GM12878 (cell line): ENCODE measurements at regions of chr3 and their contacts with region 1.

Region 1: GRCh38 chr3:149609595-149609994 is 48.2 kb downstream of the WWTR1 start:
- DNase-seq: peak; percentile 81
- ATAC-seq: peak; percentile 97
- H3K4me3 ChIP-seq: no peak overlapping the region
- H3K27ac ChIP-seq: no peak overlapping the region
- H3K4me1 ChIP-seq: peaks cover 16% of the 10 kb centered on the region
- H3K27me3 ChIP-seq: no peaks in the 10 kb centered on the region
- CTCF ChIP-seq: no peak
- EP300 ChIP-seq: peak; percentile 62
- POLR2A ChIP-seq: no peak
- RAD21 ChIP-seq: no peak

Region 2: GRCh38 chr3:149575961-149576564 is 33.5 kb before region 1 on chr3:
- CTCF ChIA-PET with region 1: interaction called, 80 read pairs
- POLR2A ChIA-PET with region 1: interaction called, 87 read pairs
- RAD21 ChIA-PET with region 1: interaction called, 181 read pairs
- SMC1A ChIA-PET with region 1: interaction called, 505 read pairs
- in situ Hi-C with region 1: no loop called
- intact Hi-C with region 1: no loop called
- DNase-seq: no peak
- ATAC-seq: peak; percentile 51
- H3K4me3 ChIP-seq: peak overlapping the region; percentile 10; the same call in 1 of the 2 replicates
- H3K27ac ChIP-seq: peak overlapping the region; percentile 70
- H3K4me1 ChIP-seq: peaks cover 59% of the 10 kb centered on the region
- H3K27me3 ChIP-seq: no peaks in the 10 kb centered on the region
- CTCF ChIP-seq: no peak
- EP300 ChIP-seq: 0 out of 4 replicates have a peak, but pooled peaks of 1 of the 2 experiments have one; percentile 35
- POLR2A ChIP-seq: no peak
- RAD21 ChIP-seq: no peak

Region 3: GRCh38 chr3:149581681-149582370 is 27.8 kb before region 1 on chr3:
- CTCF ChIA-PET with region 1: interaction called, 48 read pairs
- POLR2A ChIA-PET with region 1: interaction called, 87 read pairs
- RAD21 ChIA-PET with region 1: interaction called, 117 read pairs
- SMC1A ChIA-PET with region 1: interaction called, 505 read pairs
- in situ Hi-C with region 1: no loop called
- intact Hi-C with region 1: no loop called
- DNase-seq: no peak
- ATAC-seq: peak; percentile 57
- H3K4me3 ChIP-seq: peak overlapping the region; percentile 52; the same call in 1 of the 2 replicates
- H3K27ac ChIP-seq: peak overlapping the region; percentile 63
- H3K4me1 ChIP-seq: peaks cover 73% of the 10 kb centered on the region
- H3K27me3 ChIP-seq: no peaks in the 10 kb centered on the region
- CTCF ChIP-seq: no peak
- EP300 ChIP-seq: 0 out of 4 replicates have a peak, but pooled peaks of 1 of the 2 experiments have one; percentile 21
- POLR2A ChIP-seq: no peak
- RAD21 ChIP-seq: no peak

Region 4: DNA sequence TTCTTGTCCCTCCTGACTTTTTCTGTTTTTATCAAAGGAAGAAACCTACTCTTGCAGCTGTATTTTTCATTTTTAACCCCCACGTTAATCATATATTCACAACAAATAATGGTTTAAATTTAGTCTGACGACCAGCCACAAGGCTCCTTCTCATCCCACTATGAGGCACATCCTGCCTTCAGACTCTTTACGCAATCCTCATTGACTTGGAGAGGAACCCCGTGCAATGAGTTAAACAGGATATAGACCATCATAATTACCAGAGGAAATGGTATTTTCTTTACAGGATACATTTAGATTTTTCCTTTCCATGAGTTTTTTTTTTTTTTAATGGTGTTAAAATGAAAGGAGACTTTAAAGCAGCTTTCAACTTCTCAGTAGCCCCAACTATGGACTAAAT is 20.3 kb before region 1 on chr3:
- CTCF ChIA-PET with region 1: interaction called, 6 read pairs
- POLR2A ChIA-PET with region 1: interaction called, 87 read pairs
- RAD21 ChIA-PET with region 1: interaction called, 77 read pairs
- SMC1A ChIA-PET with region 1: interaction called, 197 read pairs
- in situ Hi-C with region 1: no loop called
- intact Hi-C with region 1: no loop called
- DNase-seq: no peak
- ATAC-seq: no peak
- H3K4me3 ChIP-seq: no peak overlapping the region
- H3K27ac ChIP-seq: no peak overlapping the region
- H3K4me1 ChIP-seq: peaks cover 24% of the 10 kb centered on the region
- H3K27me3 ChIP-seq: no peaks in the 10 kb centered on the region
- CTCF ChIP-seq: no peak
- EP300 ChIP-seq: no peak
- POLR2A ChIP-seq: no peak
- RAD21 ChIP-seq: no peak

Region 5: DNA sequence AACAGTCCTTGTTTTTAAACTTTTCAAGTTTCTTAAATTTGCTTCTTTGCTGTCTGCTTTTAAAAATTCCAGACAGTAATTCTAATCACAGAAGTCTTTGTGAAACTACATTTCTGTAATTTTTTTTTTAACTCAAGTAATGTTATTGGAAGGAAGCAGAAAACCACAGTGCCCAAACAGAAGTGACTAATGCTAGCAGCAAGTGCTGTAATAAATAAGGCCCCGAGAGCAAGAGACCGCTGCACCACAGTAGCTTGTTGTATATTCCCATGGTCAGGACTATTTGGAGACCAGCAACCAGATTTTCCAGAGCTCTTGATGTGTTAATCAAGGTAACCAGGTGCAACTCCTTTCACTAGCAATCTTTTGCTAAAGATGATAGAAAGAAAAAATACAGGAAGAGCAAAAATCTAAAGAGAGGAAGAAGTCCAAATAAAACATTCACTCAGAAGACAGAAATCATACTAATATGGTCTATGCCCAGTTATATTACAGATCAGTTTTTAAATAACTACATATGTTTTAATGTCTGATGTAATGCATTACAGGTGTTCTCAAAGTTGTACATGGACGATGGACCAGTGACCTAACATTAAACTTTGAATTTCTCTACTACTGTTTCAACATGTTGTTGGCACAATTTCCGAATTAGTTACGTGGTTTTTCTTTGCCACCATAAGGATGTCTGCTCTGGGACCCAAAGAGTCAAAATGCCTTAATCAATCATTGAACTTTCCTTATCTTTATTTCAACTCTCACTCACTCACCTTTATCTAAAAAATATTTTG is 11.8 kb after region 1 on chr3:
- CTCF ChIA-PET with region 1: interaction called, 14 read pairs
- POLR2A ChIA-PET with region 1: interaction called, 9 read pairs
- RAD21 ChIA-PET with region 1: interaction called, 11 read pairs
- SMC1A ChIA-PET with region 1: interaction called, 53 read pairs
- in situ Hi-C with region 1: no loop called
- intact Hi-C with region 1: no loop called
- DNase-seq: no peak
- ATAC-seq: peak; percentile 89
- H3K4me3 ChIP-seq: no peak overlapping the region
- H3K27ac ChIP-seq: no peak overlapping the region
- H3K4me1 ChIP-seq: peaks cover 14% of the 10 kb centered on the region
- H3K27me3 ChIP-seq: no peaks in the 10 kb centered on the region
- CTCF ChIP-seq: no peak
- EP300 ChIP-seq: no peak
- POLR2A ChIP-seq: no peak
- RAD21 ChIP-seq: no peak

Region 6: GRCh38 chr3:149634573-149634972 is 25.0 kb after region 1 on chr3:
- CTCF ChIA-PET with region 1: interaction called, 7 read pairs
- POLR2A ChIA-PET with region 1: interaction called, 4 read pairs
- RAD21 ChIA-PET with region 1: interaction called, 3 read pairs
- SMC1A ChIA-PET with region 1: interaction called, 24 read pairs
- in situ Hi-C with region 1: no loop called
- intact Hi-C with region 1: no loop called
- DNase-seq: no peak
- ATAC-seq: no peak
- H3K4me3 ChIP-seq: no peak overlapping the region
- H3K27ac ChIP-seq: no peak overlapping the region
- H3K4me1 ChIP-seq: no peaks in the 10 kb centered on the region; the same call in 1 of the 2 replicates
- H3K27me3 ChIP-seq: no peaks in the 10 kb centered on the region
- CTCF ChIP-seq: no peak
- EP300 ChIP-seq: no peak
- POLR2A ChIP-seq: no peak
- RAD21 ChIP-seq: no peak

Region 7: GRCh38 chr3:149646181-149646766 is 36.7 kb after region 1 on chr3:
- CTCF ChIA-PET with region 1: interaction called, 6 read pairs
- POLR2A ChIA-PET with region 1: interaction called, 4 read pairs
- RAD21 ChIA-PET with region 1: interaction called, 13 read pairs
- SMC1A ChIA-PET with region 1: interaction called, 16 read pairs
- in situ Hi-C with region 1: no loop called
- intact Hi-C with region 1: no loop called
- DNase-seq: no peak
- ATAC-seq: peak; percentile 51
- H3K4me3 ChIP-seq: no peak overlapping the region
- H3K27ac ChIP-seq: no peak overlapping the region
- H3K4me1 ChIP-seq: peaks cover 14% of the 10 kb centered on the region
- H3K27me3 ChIP-seq: no peaks in the 10 kb centered on the region
- CTCF ChIP-seq: no peak
- EP300 ChIP-seq: no peak
- POLR2A ChIP-seq: no peak
- RAD21 ChIP-seq: no peak

Region 8: DNA sequence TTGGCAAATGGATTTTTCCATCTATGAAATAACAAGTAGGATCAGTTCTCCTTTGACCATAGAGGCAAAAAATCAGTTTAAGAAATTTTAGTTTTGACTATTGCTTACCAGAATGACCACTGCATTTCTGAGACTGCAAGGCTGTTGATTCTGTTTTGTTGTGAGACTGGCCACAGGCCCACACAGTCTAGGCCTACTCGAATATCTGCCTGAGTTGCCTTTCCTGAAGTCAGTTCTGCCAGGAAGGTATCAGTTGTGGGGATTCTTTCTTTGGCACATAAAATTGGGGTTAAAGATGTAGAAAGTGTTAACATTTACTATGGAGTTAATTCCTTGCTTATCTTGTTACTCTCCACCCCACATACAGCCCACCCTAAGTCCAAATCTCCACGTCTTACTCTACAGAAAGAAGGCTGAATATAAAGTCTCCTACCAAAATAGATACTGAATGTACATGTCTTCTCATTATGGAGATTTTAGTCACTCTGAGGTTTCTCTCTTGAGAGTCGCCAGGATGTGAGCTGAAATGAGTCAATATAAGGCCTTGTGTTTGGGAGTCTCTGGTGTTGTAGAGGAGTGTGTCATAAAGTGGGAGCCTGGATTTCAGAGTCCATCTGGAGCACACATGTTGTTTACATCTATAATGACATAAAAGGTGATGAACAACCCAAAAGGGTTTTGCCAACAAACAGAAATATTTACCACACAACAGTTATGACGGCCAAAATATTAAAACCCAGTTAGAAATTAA is 93.3 kb after region 1 on chr3:
- CTCF ChIA-PET with region 1: no interaction called
- POLR2A ChIA-PET with region 1: no interaction called
- RAD21 ChIA-PET with region 1: no interaction called
- SMC1A ChIA-PET with region 1: no interaction called
- in situ Hi-C with region 1: no loop called
- intact Hi-C with region 1: no loop called
- DNase-seq: no peak
- ATAC-seq: peak; percentile 64
- H3K4me3 ChIP-seq: no peak overlapping the region
- H3K27ac ChIP-seq: no peak overlapping the region
- H3K4me1 ChIP-seq: no peaks in the 10 kb centered on the region
- H3K27me3 ChIP-seq: no peaks in the 10 kb centered on the region
- CTCF ChIP-seq: no peak
- EP300 ChIP-seq: no peak
- POLR2A ChIP-seq: no peak
- RAD21 ChIP-seq: no peak